ENCODE measurements at regions of chr1 and their contacts with region 1.

Region 1: GRCh38 chr1:64654519-64655341 is 90.1 kb upstream of the RAVER2 start:
- DNase-seq: no peak
- H3K4me3 ChIP-seq: no peak overlapping the region
- H3K4me3 Mint-ChIP-seq: no peak overlapping the region
- H3K27ac Mint-ChIP-seq: no peak overlapping the region
- H3K4me1 ChIP-seq: peaks cover 22% of the 10 kb centered on the region
- H3K4me1 Mint-ChIP-seq: peaks cover 12% of the 10 kb centered on the region
- H3K27me3 ChIP-seq: no peaks in the 10 kb centered on the region
- H3K27me3 Mint-ChIP-seq: no peaks in the 10 kb centered on the region
- CTCF ChIP-seq: no peak

Region 2: GRCh38 chr1:64505232-64505943 is 149.3 kb before region 1 on chr1:
- CTCF ChIA-PET with region 1: interaction called, 3 read pairs
- POLR2A ChIA-PET with region 1: no interaction called
- intact Hi-C with region 1: loop called (anchors 10 kb)
- DNase-seq: peak; percentile 35 to 53
- H3K4me3 ChIP-seq: peak overlapping the region; percentile 30
- H3K4me3 Mint-ChIP-seq: peak overlapping the region; percentile 87
- H3K27ac Mint-ChIP-seq: peak overlapping the region; percentile 72
- H3K4me1 ChIP-seq: 0 out of 2 replicates have a peak, but pooled peaks cover 6% of the 10 kb centered on the region
- H3K4me1 Mint-ChIP-seq: peaks cover 7% of the 10 kb centered on the region
- H3K27me3 ChIP-seq: no peaks in the 10 kb centered on the region
- H3K27me3 Mint-ChIP-seq: no peaks in the 10 kb centered on the region
- CTCF ChIP-seq: no peak

Region 3: DNA sequence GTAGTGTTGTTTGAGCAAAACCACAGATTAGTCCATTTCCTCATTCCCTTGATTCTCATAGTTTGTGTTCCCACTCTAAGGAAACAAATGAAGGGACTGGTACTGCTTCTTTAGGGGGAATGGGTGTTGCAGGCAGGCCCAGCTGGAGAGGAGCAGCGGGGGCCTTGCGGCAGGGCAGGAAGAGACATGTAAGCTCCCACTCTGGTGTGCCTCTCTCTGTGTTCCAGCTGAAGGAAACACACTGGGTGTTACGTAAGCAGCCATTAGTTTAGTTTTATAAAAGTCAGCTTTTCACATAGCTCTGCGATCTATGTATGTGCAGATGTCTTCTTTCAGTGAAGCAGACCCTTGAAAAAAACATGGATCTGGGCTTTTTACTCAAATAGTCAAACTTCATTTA is 85.3 kb before region 1 on chr1:
- CTCF ChIA-PET with region 1: no interaction called
- POLR2A ChIA-PET with region 1: no interaction called
- intact Hi-C with region 1: loop called (anchors 10 kb)
- DNase-seq: no peak
- H3K4me3 ChIP-seq: no peak overlapping the region
- H3K4me3 Mint-ChIP-seq: no peak overlapping the region
- H3K27ac Mint-ChIP-seq: no peak overlapping the region
- H3K4me1 ChIP-seq: peaks cover 16% of the 10 kb centered on the region
- H3K4me1 Mint-ChIP-seq: peaks cover 26% of the 10 kb centered on the region
- H3K27me3 ChIP-seq: no peaks in the 10 kb centered on the region
- H3K27me3 Mint-ChIP-seq: no peaks in the 10 kb centered on the region
- CTCF ChIP-seq: no peak

Region 4: GRCh38 chr1:64598100-64598571 is 56.6 kb before region 1 on chr1:
- CTCF ChIA-PET with region 1: no interaction called
- POLR2A ChIA-PET with region 1: interaction called, 5 read pairs
- intact Hi-C with region 1: loop called (anchors 1 kb)
- DNase-seq: peak; percentile 30 to 62
- H3K4me3 ChIP-seq: peak overlapping the region; percentile 5; the same call in 1 of the 2 replicates
- H3K4me3 Mint-ChIP-seq: peak overlapping the region; percentile 50
- H3K27ac Mint-ChIP-seq: peak overlapping the region; percentile 91
- H3K4me1 ChIP-seq: peaks cover 46% of the 10 kb centered on the region
- H3K4me1 Mint-ChIP-seq: peaks cover 46% of the 10 kb centered on the region
- H3K27me3 ChIP-seq: no peaks in the 10 kb centered on the region
- H3K27me3 Mint-ChIP-seq: no peaks in the 10 kb centered on the region
- CTCF ChIP-seq: no peak